CD4-positive, alpha-beta T cell (primary cell): ENCODE measurements at regions of chr10 and their contacts with region 1.

Region 1: GRCh38 chr10:33008499-33009243 is 50.6 kb upstream of the ITGB1 start:
- DNase-seq: peak; percentile 29 to 85 (median 46)
- ATAC-seq: peak; percentile 51
- H3K4me3 ChIP-seq: peak overlapping the region; percentile 32
- H3K4me3 Mint-ChIP-seq: peak overlapping the region; percentile 88
- H3K27ac ChIP-seq: peak overlapping the region in 1 of 2 donors; percentile 74
- H3K27ac Mint-ChIP-seq: peak overlapping the region; percentile 87
- H3K4me1 ChIP-seq: peaks cover 48% of the 10 kb centered on the region
- H3K4me1 Mint-ChIP-seq: peaks cover 49% of the 10 kb centered on the region
- H3K27me3 ChIP-seq: no peaks in the 10 kb centered on the region
- H3K27me3 Mint-ChIP-seq: peaks cover 6% of the 10 kb centered on the region
- CTCF ChIP-seq: peak; percentile 100

Region 2: DNA sequence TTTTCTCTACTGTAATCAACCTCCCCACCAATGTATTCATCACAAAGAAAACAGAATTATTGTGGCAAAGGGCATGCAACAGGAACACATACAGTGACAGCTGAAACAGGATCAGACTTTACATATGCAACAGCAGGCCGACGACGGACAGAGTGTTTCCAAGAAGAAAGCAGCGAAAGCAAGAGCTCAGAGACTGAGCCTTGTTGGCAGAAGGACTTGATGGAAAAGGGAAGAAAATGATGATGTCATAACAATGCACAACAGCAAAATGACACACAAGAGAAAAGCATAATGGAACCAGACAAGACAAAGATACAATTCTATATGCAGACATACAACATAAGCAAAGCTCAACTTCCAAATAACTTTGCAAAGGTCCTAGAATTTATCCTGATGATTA is 1186.5 kb before region 1 on chr10:
- CTCF ChIA-PET with region 1: no interaction called
- POLR2A ChIA-PET with region 1: no interaction called
- intact Hi-C with region 1: no loop called
- DNase-seq: no peak
- ATAC-seq: no peak
- H3K4me3 ChIP-seq: no peak overlapping the region
- H3K4me3 Mint-ChIP-seq: no peak overlapping the region
- H3K27ac ChIP-seq: no peak overlapping the region
- H3K27ac Mint-ChIP-seq: no peak overlapping the region
- H3K4me1 ChIP-seq: no peaks in the 10 kb centered on the region
- H3K4me1 Mint-ChIP-seq: no peaks in the 10 kb centered on the region
- H3K27me3 ChIP-seq: no peaks in the 10 kb centered on the region
- H3K27me3 Mint-ChIP-seq: no peaks in the 10 kb centered on the region
- CTCF ChIP-seq: no peak

Region 3: GRCh38 chr10:32190890-32191491 is 817.7 kb before region 1 on chr10:
- CTCF ChIA-PET with region 1: no interaction called
- POLR2A ChIA-PET with region 1: no interaction called
- intact Hi-C with region 1: loop called (anchors 1 to 5 kb)
- DNase-seq: peak in 3 of 14 experiments; percentile 53 to 68 (median 64)
- ATAC-seq: peak; percentile 63
- H3K4me3 ChIP-seq: no peak overlapping the region
- H3K4me3 Mint-ChIP-seq: no peak overlapping the region
- H3K27ac ChIP-seq: no peak overlapping the region
- H3K27ac Mint-ChIP-seq: no peak overlapping the region
- H3K4me1 ChIP-seq: no peaks in the 10 kb centered on the region
- H3K4me1 Mint-ChIP-seq: peaks cover 4% of the 10 kb centered on the region
- H3K27me3 ChIP-seq: no peaks in the 10 kb centered on the region
- H3K27me3 Mint-ChIP-seq: peaks cover 5% of the 10 kb centered on the region
- CTCF ChIP-seq: peak; percentile 84

Region 4: DNA sequence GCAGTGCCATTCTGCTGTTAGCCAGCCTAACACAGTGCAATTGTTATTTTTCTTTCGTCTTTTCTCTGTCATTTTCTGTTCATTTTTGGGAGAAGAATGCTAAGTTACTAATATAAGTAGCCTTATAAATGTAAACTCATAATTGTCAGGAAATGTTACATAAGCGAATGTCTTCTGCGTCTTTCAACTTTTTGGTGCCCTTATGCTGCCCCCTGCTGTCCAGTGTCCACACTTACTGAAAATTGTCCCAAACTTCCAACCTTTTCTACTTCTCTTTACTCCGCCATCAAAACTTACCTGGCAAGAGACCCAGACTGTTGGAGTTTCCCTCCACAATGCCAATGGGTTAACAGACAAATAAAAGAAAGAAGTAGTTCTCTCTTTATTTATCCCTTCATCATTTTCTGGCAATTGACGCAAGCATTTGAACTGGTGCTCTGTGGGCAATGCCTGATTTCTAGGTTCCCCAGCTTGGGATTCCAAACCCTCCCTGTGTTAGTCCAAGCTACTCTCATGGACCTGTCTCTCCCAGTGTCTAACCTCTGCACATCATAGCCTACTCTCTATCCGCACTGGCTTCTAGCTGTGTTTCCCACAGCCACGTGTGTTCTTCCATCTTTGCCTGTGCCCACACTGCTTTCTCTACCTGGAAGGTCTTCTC is 640.7 kb before region 1 on chr10:
- CTCF ChIA-PET with region 1: interaction called, 3 read pairs
- POLR2A ChIA-PET with region 1: no interaction called
- intact Hi-C with region 1: loop called (anchors 2 to 10 kb)
- DNase-seq: peak; percentile 63 to 89 (median 72)
- ATAC-seq: peak; percentile 75
- H3K4me3 ChIP-seq: no peak overlapping the region
- H3K4me3 Mint-ChIP-seq: peak overlapping the region; percentile 26
- H3K27ac ChIP-seq: peak overlapping the region in 1 of 2 donors; percentile 38
- H3K27ac Mint-ChIP-seq: peak overlapping the region; percentile 58
- H3K4me1 ChIP-seq: peaks cover 55% of the 10 kb centered on the region
- H3K4me1 Mint-ChIP-seq: peaks cover 72% of the 10 kb centered on the region
- H3K27me3 ChIP-seq: no peaks in the 10 kb centered on the region
- H3K27me3 Mint-ChIP-seq: no peaks in the 10 kb centered on the region
- CTCF ChIP-seq: peak; percentile 92

Region 5: DNA sequence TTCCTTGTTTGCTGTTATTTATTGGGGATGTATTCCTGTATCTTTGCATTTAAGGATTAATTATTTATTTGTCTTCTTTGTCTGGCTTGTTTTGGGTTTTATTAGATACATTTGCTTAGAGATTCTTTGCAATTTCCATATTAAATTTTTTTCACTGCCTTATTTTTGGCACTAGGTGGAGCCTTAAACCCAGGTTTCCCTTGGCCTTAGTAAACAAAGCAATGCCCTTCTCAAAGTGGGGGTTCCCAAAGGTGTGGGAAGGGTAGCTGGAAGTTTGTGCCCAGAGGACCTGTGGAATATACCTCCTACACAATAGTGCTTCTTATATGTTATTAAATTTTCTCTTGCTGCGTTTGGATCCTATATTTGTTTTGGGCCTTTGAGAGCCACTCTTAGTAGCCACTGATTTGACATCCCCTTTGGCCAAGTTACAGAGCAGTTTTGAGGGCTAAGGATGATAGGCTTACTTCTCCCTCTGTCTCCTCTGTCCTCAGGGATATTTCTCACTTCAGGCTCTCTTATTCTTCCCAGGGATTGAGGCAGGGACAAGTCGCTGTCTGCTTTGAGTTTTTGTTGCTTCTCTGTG is 213.0 kb before region 1 on chr10:
- CTCF ChIA-PET with region 1: interaction called, 3 read pairs
- POLR2A ChIA-PET with region 1: no interaction called
- intact Hi-C with region 1: loop called (anchors 1 kb)
- DNase-seq: peak in 4 of 14 experiments; percentile 23 to 66 (median 58)
- ATAC-seq: peak; percentile 46
- H3K4me3 ChIP-seq: no peak overlapping the region
- H3K4me3 Mint-ChIP-seq: no peak overlapping the region
- H3K27ac ChIP-seq: no peak overlapping the region
- H3K27ac Mint-ChIP-seq: no peak overlapping the region
- H3K4me1 ChIP-seq: no peaks in the 10 kb centered on the region
- H3K4me1 Mint-ChIP-seq: no peaks in the 10 kb centered on the region
- H3K27me3 ChIP-seq: no peaks in the 10 kb centered on the region
- H3K27me3 Mint-ChIP-seq: no peaks in the 10 kb centered on the region
- CTCF ChIP-seq: peak; percentile 83

Region 6: DNA sequence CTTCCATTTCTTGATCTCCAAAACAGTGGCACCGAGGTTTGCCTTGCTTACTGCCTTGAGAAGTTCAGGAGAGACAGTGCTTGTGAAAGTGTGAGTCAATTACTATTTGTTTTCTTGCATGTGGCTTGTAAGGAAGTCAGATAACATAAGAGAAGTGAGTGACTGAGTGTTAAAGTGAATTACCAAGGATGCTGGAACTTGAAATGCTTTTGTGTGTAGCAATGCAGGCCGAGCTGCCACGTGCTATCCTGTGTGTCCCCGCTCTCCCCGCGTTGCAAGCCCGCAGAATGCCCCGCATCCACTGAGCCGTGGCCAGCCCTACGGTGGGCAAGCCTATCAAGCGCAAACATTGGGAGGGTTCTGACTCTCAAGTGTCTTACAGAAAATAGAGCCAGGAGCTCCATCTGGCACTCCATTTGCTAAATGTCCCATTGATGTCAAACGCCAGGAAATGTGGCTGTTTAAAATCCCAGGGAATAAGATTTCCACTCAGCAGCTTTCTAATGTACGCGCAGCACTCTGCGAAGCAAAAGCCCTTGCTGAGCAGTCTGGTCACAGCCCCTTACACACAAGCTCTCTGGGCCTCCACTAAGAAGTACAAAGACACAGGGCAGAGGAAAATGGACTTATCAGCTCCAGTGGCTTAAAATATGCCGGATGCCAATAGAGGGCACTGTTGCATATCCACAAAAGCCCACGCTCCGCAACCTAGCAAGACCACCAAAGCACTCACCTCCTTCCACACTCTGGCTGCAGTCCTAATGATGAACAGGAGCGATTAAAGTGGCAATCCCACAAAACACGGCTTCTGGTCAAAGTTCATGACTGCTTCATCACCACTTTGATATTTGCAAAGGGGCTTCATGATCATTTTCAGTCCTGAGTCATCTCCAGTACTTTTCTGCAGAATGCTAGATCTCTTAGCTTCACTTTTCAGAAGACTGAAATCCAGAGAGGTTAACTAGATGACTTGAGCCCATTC is 107.4 kb after region 1 on chr10:
- CTCF ChIA-PET with region 1: interaction called, 15 read pairs
- POLR2A ChIA-PET with region 1: interaction called, 13 read pairs
- intact Hi-C with region 1: no loop called
- DNase-seq: peak in 4 of 14 experiments; percentile 51 to 74 (median 66)
- ATAC-seq: peak; percentile 28
- H3K4me3 ChIP-seq: peak overlapping the region; percentile 50
- H3K4me3 Mint-ChIP-seq: peak overlapping the region; percentile 70
- H3K27ac ChIP-seq: peak overlapping the region; percentile 38 to 79
- H3K27ac Mint-ChIP-seq: peak overlapping the region; percentile 88
- H3K4me1 ChIP-seq: peaks cover 72% of the 10 kb centered on the region
- H3K4me1 Mint-ChIP-seq: peaks cover 91% of the 10 kb centered on the region
- H3K27me3 ChIP-seq: no peaks in the 10 kb centered on the region
- H3K27me3 Mint-ChIP-seq: no peaks in the 10 kb centered on the region
- CTCF ChIP-seq: peak; percentile 47

Region 7: DNA sequence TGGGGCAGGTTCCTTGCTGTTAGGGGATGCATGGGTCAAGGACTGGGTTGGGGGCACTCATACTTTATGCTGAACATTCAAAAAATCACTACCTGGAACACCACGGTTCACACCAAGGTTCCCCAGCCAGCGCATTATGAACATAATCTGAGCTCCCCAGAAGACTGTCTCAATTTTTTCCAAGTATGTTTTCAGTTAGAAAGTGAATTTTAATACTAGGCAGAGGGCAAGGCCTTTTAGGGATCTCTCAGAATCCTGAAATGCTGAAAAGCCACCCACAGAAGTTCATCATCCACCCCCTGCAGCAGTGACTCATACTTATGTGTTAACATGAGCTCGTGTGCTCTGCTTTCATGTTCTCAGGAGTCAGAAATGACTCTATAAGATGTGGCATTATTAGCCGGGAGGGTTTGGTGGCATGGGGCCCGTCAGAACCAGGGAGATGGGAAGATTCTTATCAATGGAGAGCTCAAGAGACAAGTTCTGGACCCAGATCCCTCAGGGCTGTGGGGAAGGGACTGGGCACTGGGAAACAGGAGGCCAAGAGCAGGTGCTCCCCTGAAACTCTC is 134.6 kb after region 1 on chr10:
- CTCF ChIA-PET with region 1: interaction called, 17 read pairs
- POLR2A ChIA-PET with region 1: interaction called, 3 read pairs
- intact Hi-C with region 1: no loop called
- DNase-seq: peak in 8 of 14 experiments; percentile 20 to 70 (median 30)
- ATAC-seq: peak; percentile 14
- H3K4me3 ChIP-seq: no peak overlapping the region
- H3K4me3 Mint-ChIP-seq: no peak overlapping the region
- H3K27ac ChIP-seq: no peak overlapping the region
- H3K27ac Mint-ChIP-seq: peak overlapping the region; percentile 52
- H3K4me1 ChIP-seq: peaks cover 70% of the 10 kb centered on the region
- H3K4me1 Mint-ChIP-seq: peaks cover 52% of the 10 kb centered on the region
- H3K27me3 ChIP-seq: no peaks in the 10 kb centered on the region
- H3K27me3 Mint-ChIP-seq: no peaks in the 10 kb centered on the region
- CTCF ChIP-seq: no peak